Brain microvascular endothelial cell (primary cell): ENCODE measurements at regions of chr17 and their contacts with region 1.

Region 1: DNA sequence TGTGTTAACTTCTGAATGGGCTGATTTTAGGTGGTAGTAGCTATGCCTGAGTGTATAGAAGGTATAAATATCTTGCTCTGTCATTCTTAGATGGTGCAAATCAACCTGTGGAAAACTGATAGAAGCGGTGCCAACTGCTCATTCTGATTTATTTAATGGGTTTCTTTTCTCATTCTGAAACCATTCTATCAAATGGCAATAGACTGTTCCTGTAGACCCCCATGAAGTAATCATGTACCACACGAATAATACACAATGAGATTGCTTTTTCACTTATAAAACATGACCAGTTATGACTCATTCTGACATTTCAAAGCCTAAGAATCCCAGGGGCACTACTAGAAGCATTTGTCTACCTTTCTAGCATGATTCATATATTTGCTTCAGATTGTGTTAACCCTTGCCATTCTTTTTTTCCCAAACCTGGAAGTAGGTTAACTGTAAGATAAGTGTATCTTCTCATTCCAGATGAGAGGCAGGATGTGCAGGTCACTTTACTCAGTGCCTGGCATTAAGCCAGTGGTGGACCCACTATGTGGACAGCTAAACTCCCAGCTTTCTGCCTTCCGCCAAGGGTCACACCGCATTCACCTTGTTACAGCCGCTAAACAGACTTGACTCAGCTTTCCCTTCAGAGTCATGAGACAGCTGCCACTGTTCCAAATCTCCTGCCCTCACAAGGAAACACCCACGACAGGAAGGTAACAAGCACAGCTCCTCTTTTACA is 16.4 kb upstream of the SLC16A11 start:
- DNase-seq: peak; percentile 60
- H3K4me3 ChIP-seq: no peak overlapping the region
- H3K27ac ChIP-seq: no peak overlapping the region
- H3K27me3 ChIP-seq: no peaks in the 10 kb centered on the region
- CTCF ChIP-seq: no peak

Region 2: DNA sequence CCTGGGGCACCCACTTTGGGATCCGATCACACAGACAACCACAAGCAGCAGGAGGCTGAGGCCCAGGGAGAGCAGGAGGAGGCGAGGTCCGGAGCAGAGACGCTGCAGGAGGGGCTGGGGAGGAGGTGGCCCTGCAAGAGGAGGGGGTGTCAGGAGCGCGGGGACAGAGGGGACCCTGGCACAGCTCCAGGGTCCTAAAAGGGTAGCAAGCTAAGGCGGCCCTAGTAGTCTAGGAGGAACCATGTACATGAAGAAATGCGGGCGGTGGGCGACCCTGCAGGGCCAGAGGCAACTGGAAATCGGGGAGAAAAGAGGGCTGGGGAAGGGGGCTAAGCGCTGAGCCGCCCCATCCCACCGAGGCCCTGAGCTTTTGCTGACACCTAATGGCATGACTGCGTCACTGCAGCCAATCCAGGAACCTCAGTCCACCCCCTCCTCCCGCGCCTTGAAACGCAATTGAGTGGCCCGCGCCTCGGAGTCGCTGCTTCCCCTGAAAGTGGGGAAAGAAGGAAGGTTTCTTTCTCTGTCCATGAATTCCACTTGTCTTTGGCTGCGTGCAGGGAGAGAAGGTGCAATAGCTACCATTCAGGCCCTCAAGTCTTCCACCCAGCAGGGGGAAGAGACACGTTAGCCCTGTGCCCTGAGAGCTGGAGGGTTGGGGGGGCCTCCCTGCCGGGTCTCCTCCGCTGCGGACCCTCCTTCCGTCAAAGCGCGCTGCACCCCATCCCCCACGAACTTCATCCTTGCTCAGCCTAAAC is 117.0 kb after region 1 on chr17:
- in situ Hi-C with region 1: loop called (anchors 25 kb)
- DNase-seq: peak; percentile 41
- H3K4me3 ChIP-seq: peak overlapping the region; percentile 57
- H3K27ac ChIP-seq: no peak overlapping the region
- H3K27me3 ChIP-seq: no peaks in the 10 kb centered on the region
- CTCF ChIP-seq: peak; percentile 90

Region 3: DNA sequence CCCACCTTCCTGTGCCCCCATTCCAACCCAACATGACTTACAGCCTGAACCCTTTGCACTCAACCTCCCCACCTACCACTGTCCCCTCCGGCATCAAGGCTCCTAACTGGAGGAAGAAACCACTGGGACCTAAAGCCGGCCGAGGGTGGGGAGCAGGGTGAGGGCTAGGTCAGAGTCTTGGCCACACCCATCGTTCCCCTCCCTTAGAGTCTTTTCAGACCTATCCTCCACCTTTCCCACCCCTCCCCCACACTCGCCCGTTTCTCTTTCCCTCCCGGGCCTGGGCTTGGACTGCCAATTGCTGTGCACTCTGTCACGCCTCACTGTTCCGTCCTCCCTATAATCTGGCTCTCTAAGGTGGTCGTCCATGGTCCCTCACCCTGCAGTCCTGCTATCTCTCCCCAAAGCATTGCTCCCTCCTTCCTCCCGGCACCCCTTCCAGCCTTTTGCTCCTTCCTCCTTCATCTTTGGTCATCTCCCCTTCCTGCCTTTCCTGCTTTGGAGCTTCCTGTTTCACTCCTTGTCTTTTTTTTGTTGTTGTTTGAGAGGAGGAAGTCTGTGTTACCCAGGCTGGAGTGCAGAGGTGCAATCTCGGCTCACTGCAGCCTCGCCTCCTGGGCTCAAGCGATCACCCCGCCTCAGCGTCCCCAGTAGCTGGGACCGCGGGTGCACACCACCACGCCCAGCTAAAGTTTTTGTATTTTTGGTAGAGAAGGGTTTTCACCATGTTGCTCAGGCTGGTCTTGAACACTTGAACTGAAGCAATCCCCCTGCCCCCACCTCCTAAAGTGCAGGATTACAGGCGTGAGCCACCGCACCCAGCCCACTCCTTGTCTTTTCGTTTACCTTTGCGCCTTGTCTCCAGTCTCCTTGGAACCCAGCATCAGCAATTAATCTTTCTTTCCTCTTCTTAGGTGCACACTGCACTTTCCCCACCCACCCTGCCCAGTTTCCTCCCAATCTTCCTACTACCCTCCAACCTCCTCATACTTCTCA is 203.1 kb after region 1 on chr17:
- in situ Hi-C with region 1: no loop called
- DNase-seq: no peak
- H3K4me3 ChIP-seq: no peak overlapping the region
- H3K27ac ChIP-seq: no peak overlapping the region
- H3K27me3 ChIP-seq: no peaks in the 10 kb centered on the region
- CTCF ChIP-seq: no peak

Region 4: GRCh38 chr17:7279448-7279847 is 219.1 kb after region 1 on chr17:
- in situ Hi-C with region 1: no loop called
- DNase-seq: no peak
- H3K4me3 ChIP-seq: no peak overlapping the region
- H3K27ac ChIP-seq: no peak overlapping the region
- H3K27me3 ChIP-seq: peaks cover 13% of the 10 kb centered on the region
- CTCF ChIP-seq: no peak